Activated T-helper 1 cell treated with anti-CD3 and anti-CD28 coated beads, Interleukin-12 subunit alpha, Interleukin-12 subunit beta, Interleukin-2, Interleukin-4 antibody, amounts not matched to agents 30 ng/mL and 10 ng/mL and 1 ng/mL, durations not matched to agents 14 hours and 24 hours and 36 hours (primary cell): ENCODE measurements at regions of chr14 and their contacts with region 1.

Region 1: DNA sequence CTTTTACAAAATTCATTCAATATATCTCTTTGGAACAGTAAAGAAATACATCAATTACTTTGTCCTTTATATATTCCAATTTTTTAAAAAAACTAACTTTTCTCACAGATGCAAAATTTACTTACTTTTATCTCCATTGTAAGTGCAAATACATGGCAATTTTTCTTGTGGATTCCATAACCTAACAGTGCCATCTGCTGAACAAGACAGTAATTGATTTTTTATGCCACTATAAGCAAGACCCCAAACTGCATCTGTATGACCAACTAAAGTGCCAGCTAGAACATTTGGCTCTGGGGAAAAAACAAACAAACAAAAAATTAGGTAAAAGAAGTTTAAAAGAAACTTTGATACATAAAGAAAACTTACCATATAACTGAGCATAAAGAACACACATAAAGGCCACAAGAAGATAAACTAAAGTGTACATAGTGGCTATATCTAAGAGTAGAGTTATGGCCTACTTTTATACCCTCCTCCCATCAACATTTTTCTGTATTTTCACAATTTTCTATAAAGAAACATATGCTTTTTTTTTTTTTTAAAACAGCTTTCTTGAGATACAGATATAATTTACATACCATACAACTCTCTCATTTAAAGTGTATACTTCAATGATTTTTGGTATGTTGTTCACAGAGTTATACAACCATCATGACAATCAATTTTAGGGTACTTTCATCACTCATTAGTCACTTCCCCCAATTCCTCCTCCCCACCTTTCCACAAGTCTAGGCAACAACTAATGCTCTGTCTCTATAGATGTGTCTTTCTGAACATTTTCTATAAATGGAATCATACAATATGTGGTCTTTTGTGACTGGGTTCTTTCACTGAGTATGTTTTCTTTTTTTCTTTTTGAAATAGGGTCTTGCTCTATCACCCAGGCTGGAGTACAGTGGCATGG is 32.6 kb downstream of the COCH start:
- DNase-seq: no peak
- H3K4me3 Mint-ChIP-seq: no peak overlapping the region
- H3K27ac Mint-ChIP-seq: no peak overlapping the region
- H3K4me1 Mint-ChIP-seq: no peaks in the 10 kb centered on the region
- H3K27me3 Mint-ChIP-seq: no peaks in the 10 kb centered on the region

Region 2: GRCh38 chr14:30558675-30559555 is 348.1 kb before region 1 on chr14 and contains the start of gene G2E3:
- intact Hi-C with region 1: loop called (anchors 1 kb)
- DNase-seq: peak; percentile 90
- H3K4me3 Mint-ChIP-seq: peak within 1 kb of the TSS; percentile 100
- H3K27ac Mint-ChIP-seq: peak within 1 kb of the TSS; percentile 99
- H3K4me1 Mint-ChIP-seq: peaks cover 33% of the 10 kb centered on the region
- H3K27me3 Mint-ChIP-seq: peaks cover 4% of the 10 kb centered on the region
- total RNA-seq, gene G2E3: 21.5 and 24.1 TPM in 2 replicates

Region 3: DNA sequence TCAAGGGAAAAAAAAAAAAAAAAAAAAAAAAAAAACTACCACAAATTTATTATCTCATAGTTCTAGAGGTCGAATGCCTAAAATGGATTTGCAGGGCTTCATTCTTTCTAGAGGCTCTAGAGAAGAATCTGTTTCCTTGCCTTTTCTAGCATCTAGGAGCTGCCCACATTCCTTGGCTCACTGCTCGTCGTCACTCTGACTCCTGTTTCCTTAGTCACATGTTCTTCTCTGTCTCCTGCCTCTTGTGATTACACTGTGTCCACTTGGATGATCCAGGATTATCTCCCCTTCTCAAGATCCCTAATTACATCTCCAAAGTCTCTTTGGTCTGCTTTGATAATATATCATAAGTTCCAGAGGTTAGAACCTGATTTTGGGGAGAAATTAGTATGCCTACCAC is 211.9 kb after region 1 on chr14:
- intact Hi-C with region 1: no loop called
- DNase-seq: no peak
- H3K4me3 Mint-ChIP-seq: no peak overlapping the region
- H3K27ac Mint-ChIP-seq: no peak overlapping the region
- H3K4me1 Mint-ChIP-seq: peaks cover under 1% of the 10 kb centered on the region
- H3K27me3 Mint-ChIP-seq: no peaks in the 10 kb centered on the region

Region 4: GRCh38 chr14:31286456-31287293 is 379.7 kb after region 1 on chr14:
- intact Hi-C with region 1: no loop called
- DNase-seq: no peak
- H3K4me3 Mint-ChIP-seq: no peak overlapping the region
- H3K27ac Mint-ChIP-seq: no peak overlapping the region
- H3K4me1 Mint-ChIP-seq: no peaks in the 10 kb centered on the region
- H3K27me3 Mint-ChIP-seq: no peaks in the 10 kb centered on the region

Region 5: DNA sequence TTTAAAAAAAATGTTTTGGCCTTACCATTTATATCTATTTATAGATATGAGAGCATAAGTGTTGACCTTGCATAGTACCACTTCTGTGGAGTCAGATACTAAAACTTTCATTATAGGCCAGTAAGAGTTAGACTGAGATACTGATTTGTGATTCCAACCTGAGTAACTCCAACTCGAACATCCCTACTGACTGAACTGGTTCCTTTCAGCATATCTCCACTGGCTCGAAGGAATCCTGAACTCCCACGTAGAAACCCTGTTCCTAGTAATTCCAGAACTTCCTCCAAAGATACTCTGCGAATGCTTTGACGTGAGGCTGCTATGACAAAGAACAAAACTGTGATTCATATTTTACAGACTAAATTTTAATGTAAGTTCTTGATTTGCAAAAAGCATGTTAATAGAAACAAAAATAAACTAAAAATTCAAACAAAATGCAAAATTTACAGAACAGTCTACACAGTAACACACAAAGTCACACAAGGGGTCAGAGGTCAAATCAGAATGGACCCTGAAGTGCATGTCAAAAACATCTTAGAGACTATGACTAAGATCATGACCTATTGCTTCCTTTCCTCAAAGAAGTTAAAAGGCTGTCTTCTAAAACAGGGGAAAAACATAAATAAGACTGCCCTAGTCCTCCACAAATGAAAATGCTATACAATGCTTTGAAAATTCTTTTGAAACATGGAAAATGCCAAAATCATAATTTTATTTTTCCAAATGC is 481.8 kb after region 1 on chr14:
- intact Hi-C with region 1: no loop called
- DNase-seq: no peak
- H3K4me3 Mint-ChIP-seq: peak overlapping the region; percentile 7
- H3K27ac Mint-ChIP-seq: peak overlapping the region; percentile 93
- H3K4me1 Mint-ChIP-seq: peaks cover 41% of the 10 kb centered on the region
- H3K27me3 Mint-ChIP-seq: no peaks in the 10 kb centered on the region